Posterior vena cava (tissue), 2 donors: ENCODE measurements at regions of chr7 and their contacts with region 1.

Region 1: GRCh38 chr7:122532406-122533269 is 166.3 kb downstream of the RNF133 start:
- DNase-seq: no peak

Region 2: DNA sequence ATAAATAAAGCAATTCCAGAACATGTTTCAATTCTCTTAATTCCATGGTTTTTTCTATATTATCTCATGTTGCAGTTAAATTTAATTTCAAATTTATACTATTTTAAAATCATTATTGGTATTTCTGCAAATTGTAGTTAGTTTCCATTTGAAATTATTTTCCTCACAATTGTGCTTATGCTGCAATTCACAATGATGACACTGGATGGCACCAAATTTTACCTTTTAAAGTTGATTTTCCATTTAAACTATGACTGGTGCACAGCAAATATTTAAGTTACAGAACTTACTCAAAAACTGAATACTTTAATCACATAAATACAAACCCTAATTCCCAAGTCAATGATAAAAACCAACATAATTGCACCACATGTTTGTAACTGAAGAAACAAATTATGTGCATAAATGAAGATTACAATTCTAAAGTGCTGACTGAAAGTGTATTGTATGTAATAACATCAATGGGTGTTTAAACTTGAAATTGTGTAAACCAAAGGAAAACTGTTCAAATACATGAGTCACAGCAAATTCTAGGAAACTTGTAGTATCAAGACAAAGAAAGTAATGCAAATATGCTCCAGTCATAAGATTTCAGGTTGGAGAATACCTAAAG is 313.3 kb before region 1 on chr7:
- intact Hi-C with region 1: loop called in 1 of 2 experiments (anchors 10 kb)
- DNase-seq: no peak